Activated CD4-positive, alpha-beta T cell treated with anti-CD3 and anti-CD28 coated beads, Interleukin-2, amount 10 ng/mL, durations not matched to agents 7 days and 5 days (primary cell): ENCODE measurements at regions of chr14 and their contacts with region 1.

Region 1: DNA sequence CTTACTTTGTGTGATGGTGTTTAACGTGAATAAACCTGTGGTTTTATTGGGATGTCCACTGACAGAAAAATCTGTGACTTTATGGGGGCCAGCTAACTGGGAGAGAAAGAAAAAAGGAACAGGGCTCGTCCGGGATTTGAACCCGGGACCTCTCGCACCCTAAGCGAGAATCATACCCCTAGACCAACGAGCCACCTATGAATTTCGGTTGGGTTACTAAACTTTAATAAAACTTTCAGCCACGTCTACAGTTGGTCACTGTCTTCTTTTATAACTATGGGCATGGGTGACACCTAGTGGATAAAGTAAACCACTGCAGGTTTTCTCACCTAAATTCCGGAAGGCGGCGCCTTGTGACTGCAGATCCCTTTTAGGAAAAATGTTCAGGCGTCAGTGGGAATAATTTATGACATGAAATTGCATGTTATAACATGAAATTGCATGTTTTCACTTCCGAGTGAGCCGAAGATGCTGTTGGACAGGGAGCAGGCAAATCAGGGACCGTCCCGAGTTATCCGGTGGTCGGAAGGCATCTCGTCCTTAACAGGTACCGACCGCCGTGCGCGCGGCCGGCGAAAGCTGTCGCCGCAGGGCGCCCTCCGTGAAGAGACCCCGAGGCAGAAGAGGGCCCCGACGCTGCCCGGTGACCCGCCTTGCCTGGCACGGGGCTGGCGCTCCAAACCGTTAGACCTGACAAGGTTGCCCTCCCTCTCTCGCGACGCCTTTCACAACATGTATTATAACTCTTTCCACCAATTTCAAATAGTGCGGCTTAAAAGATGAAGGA is 18.2 kb upstream of the RNASE12 start:
- DNase-seq: peak; percentile 68
- H3K4me3 Mint-ChIP-seq: no peak overlapping the region
- H3K27ac Mint-ChIP-seq: no peak overlapping the region
- H3K4me1 Mint-ChIP-seq: peaks cover 10% of the 10 kb centered on the region
- H3K27me3 Mint-ChIP-seq: no peaks in the 10 kb centered on the region

Region 2: DNA sequence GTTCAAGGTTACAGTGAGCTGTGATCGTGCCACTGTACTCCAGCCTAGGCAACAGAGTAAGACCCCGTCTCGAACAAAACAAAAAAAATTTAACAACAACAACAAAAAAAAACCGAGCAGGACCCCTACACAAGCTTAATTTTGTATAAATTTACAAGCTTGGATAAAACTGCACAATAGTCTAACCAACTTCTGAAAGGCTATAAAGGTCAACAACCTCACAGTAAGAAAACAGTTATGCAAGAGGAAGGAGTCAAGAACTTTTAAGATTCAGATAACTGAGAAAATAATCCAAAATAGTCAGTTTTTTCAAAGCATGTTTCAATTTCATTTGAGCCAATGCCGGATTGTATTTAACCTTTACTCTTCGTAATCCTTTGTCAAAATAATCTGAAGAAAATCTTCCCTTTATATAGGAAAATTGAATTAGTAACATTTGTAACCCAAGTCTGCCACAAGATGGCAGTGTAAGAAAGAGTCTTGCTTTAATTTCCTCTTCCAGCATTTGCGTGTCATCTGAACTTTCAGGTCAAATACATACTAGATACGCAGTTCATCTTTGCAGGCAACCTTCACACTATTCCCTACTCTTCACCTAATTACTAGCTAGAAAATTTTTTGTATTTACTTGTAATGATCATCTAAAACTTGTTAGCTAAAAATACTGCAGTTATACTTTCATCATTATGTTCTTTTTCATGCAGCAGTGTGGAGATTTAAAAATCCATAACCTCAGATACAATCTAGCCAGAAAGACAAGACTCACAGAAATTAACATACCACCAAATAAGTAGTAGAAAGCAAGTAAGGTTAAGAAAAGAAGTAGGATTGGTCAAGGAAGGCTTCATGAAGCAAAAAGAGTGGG is 282.2 kb before region 1 on chr14:
- CTCF ChIA-PET with region 1: interaction called, 14 read pairs
- POLR2A ChIA-PET with region 1: interaction called, 3 read pairs
- DNase-seq: peak; percentile 67
- H3K4me3 Mint-ChIP-seq: no peak overlapping the region
- H3K27ac Mint-ChIP-seq: peak overlapping the region; percentile 1
- H3K4me1 Mint-ChIP-seq: peaks cover 45% of the 10 kb centered on the region
- H3K27me3 Mint-ChIP-seq: no peaks in the 10 kb centered on the region

Region 3: GRCh38 chr14:20644520-20644919 is 35.1 kb after region 1 on chr14:
- CTCF ChIA-PET with region 1: no interaction called
- POLR2A ChIA-PET with region 1: no interaction called
- DNase-seq: no peak
- H3K4me3 Mint-ChIP-seq: no peak overlapping the region
- H3K27ac Mint-ChIP-seq: no peak overlapping the region
- H3K4me1 Mint-ChIP-seq: no peaks in the 10 kb centered on the region
- H3K27me3 Mint-ChIP-seq: peaks cover 46% of the 10 kb centered on the region